Heart left ventricle (tissue), 16 donors: ENCODE measurements at regions of chr2 and their contacts with region 1.

Region 1: GRCh38 chr2:59182249-59182648 is 941.1 kb upstream of the FANCL start:
- DNase-seq: peak in 1 of 5 donors; percentile 17
- ATAC-seq: peak in 1 of 4 donors; percentile 29
- H3K4me3 ChIP-seq: no peak overlapping the region
- H3K27ac ChIP-seq: no peak overlapping the region
- H3K4me1 ChIP-seq: no peaks in the 10 kb centered on the region
- H3K27me3 ChIP-seq: no peaks in the 10 kb centered on the region
- CTCF ChIP-seq: peak in 11 of 12 donors; percentile 8 to 51 (median 34)
- POLR2A ChIP-seq: no peak

Region 2: DNA sequence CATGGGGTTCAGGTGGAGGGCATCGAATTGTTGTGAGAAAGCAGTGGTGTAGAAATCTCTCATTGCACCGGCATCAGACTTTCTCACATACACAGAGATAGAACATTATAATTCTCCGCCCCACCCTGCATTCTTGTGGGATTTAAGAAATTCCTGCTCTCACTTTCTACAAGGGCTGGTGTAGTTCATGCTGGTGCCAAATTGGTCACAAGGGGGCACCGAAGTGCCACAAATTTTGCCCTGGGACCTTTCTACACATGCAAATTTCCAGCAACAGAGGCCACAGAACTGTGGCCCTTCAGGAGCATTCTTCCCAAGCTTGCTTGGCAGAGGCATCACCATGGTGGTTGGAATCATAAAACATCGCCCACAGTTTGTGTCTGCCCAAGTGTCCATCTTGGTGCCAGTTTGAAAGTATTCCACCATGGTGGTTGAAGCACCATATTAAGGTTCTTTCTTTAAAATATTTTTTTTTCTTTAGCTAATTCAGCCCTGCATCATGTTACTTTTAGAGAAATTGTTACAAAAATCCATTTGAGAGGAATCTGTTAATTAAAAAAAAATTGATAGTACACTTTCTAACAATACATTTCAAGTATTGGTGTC is 420.0 kb before region 1 on chr2:
- intact Hi-C with region 1: loop called in 5 of 10 experiments (anchors 5 to 10 kb)
- DNase-seq: peak in 2 of 5 donors; percentile 9 to 29
- ATAC-seq: peak in 2 of 4 donors; percentile 53 to 66
- H3K4me3 ChIP-seq: no peak overlapping the region
- H3K27ac ChIP-seq: no peak overlapping the region
- H3K4me1 ChIP-seq: no peaks in the 10 kb centered on the region
- H3K27me3 ChIP-seq: peaks cover 0 to 10% (median 0%) of the 10 kb centered on the region in 9 donors
- CTCF ChIP-seq: peak; percentile 29 to 60 (median 46)
- POLR2A ChIP-seq: no peak

Region 3: GRCh38 chr2:58769864-58770234 is 412.4 kb before region 1 on chr2:
- intact Hi-C with region 1: loop called in 3 of 10 experiments (anchors 10 kb)
- DNase-seq: no peak
- ATAC-seq: no peak
- H3K4me3 ChIP-seq: no peak overlapping the region
- H3K27ac ChIP-seq: no peak overlapping the region
- H3K4me1 ChIP-seq: no peaks in the 10 kb centered on the region
- H3K27me3 ChIP-seq: peaks cover 0 to 19% (median 0%) of the 10 kb centered on the region in 9 donors
- CTCF ChIP-seq: no peak
- POLR2A ChIP-seq: no peak

Region 4: GRCh38 chr2:59034837-59035236 is 147.4 kb before region 1 on chr2:
- intact Hi-C with region 1: no loop called
- DNase-seq: no peak
- ATAC-seq: no peak
- H3K4me3 ChIP-seq: no peak overlapping the region
- H3K27ac ChIP-seq: no peak overlapping the region
- H3K4me1 ChIP-seq: no peaks in the 10 kb centered on the region
- H3K27me3 ChIP-seq: no peaks in the 10 kb centered on the region
- CTCF ChIP-seq: no peak
- POLR2A ChIP-seq: no peak